Activated T-helper 2 cell treated with anti-CD3 and anti-CD28 coated beads, Interferon-gamma antibody, Interleukin-2, Interleukin-4, amounts not matched to agents 10 μg/mL and 5 μg/mL and 100 μg/mL, durations not matched to agents 14 hours and 24 hours and 36 hours (primary cell): ENCODE measurements at regions of chr2 and their contacts with region 1.

Region 1: GRCh38 chr2:161077367-161078210 is 82.6 kb upstream of the TANK start:
- DNase-seq: peak; percentile 78
- H3K4me3 Mint-ChIP-seq: peak overlapping the region; percentile 28
- H3K27ac Mint-ChIP-seq: peak overlapping the region; percentile 89
- H3K4me1 Mint-ChIP-seq: peaks cover 51% of the 10 kb centered on the region
- H3K27me3 Mint-ChIP-seq: no peaks in the 10 kb centered on the region

Region 2: GRCh38 chr2:159895258-159896065 is 1182.1 kb before region 1 on chr2:
- intact Hi-C with region 1: loop called (anchors 10 kb)
- DNase-seq: no peak
- H3K4me3 Mint-ChIP-seq: no peak overlapping the region
- H3K27ac Mint-ChIP-seq: peak overlapping the region; percentile 84
- H3K4me1 Mint-ChIP-seq: peaks cover 64% of the 10 kb centered on the region
- H3K27me3 Mint-ChIP-seq: no peaks in the 10 kb centered on the region

Region 3: GRCh38 chr2:160493227-160494028 is 584.2 kb before region 1 on chr2 and contains the start of gene RBMS1:
- intact Hi-C with region 1: loop called (anchors 5 kb)
- DNase-seq: peak; percentile 35
- H3K4me3 Mint-ChIP-seq: peak within 1 kb of the TSS; percentile 93
- H3K27ac Mint-ChIP-seq: peak within 1 kb of the TSS; percentile 91
- H3K4me1 Mint-ChIP-seq: peaks cover 43% of the 10 kb centered on the region
- H3K27me3 Mint-ChIP-seq: peaks cover 28% of the 10 kb centered on the region
- total RNA-seq, gene RBMS1: 40.1 and 42.2 TPM in 2 replicates

Region 4: GRCh38 chr2:161136696-161137324 is 59.2 kb after region 1 on chr2:
- intact Hi-C with region 1: loop called (anchors 1 kb)
- DNase-seq: no peak
- H3K4me3 Mint-ChIP-seq: peak overlapping the region; percentile 88
- H3K27ac Mint-ChIP-seq: peak overlapping the region; percentile 96
- H3K4me1 Mint-ChIP-seq: peaks cover 44% of the 10 kb centered on the region
- H3K27me3 Mint-ChIP-seq: no peaks in the 10 kb centered on the region

Region 5: GRCh38 chr2:161243905-161244304 is 166.3 kb after region 1 on chr2:
- intact Hi-C with region 1: loop called (anchors 1 kb)
- DNase-seq: no peak
- H3K4me3 Mint-ChIP-seq: peak overlapping the region; percentile 86
- H3K27ac Mint-ChIP-seq: peak overlapping the region; percentile 94
- H3K4me1 Mint-ChIP-seq: peaks cover 51% of the 10 kb centered on the region
- H3K27me3 Mint-ChIP-seq: no peaks in the 10 kb centered on the region

Region 6: GRCh38 chr2:162073888-162074645 is 996.5 kb after region 1 on chr2 and contains the start of gene DPP4:
- intact Hi-C with region 1: loop called (anchors 5 kb)
- DNase-seq: peak; percentile 46
- H3K4me3 Mint-ChIP-seq: peak within 1 kb of the TSS; percentile 87
- H3K27ac Mint-ChIP-seq: peak within 1 kb of the TSS; percentile 74
- H3K4me1 Mint-ChIP-seq: peaks cover 48% of the 10 kb centered on the region
- H3K27me3 Mint-ChIP-seq: no peaks in the 10 kb centered on the region
- total RNA-seq, gene DPP4: 65.8 and 67.0 TPM in 2 replicates